Lower lobe of right lung (tissue), 2 donors: ENCODE measurements at regions of chr10 and their contacts with region 1.

Region 1: DNA sequence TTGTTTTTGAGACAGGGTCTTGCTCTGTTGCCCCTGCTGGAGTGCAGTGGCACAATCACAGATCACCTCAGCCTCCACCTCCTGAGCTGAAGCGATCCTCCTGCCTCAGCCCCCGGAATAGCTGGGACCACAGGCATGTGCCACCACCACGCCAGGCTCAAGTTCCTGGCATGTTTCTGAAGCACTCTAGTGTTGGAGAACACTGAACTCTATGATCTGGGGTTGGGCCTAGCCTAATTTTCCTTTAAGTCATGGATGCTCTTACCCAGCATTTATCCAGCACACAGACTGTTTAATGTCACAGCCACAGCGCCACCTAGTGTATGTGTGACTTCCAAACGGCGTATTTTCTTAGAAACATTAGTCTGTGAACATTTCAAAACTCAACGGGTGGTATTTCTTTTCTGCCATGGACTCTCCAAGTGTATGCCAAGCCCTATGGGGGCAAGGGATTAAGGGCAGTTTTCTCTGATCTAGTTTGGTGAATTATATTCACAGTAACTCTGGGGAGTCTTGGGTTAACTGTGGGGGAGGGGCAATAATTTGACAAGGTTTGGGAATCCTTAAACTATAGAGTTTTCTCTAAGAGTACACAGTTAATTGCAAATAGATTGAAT is 91.8 kb downstream of the CREM start:
- DNase-seq: peak; percentile 80
- ATAC-seq: peak; percentile 87 to 91
- H3K4me3 ChIP-seq: no peak overlapping the region
- H3K27ac ChIP-seq: peak overlapping the region; percentile 56
- H3K4me1 ChIP-seq: peaks cover 28% of the 10 kb centered on the region
- H3K27me3 ChIP-seq: no peaks in the 10 kb centered on the region
- CTCF ChIP-seq: peak; percentile 76

Region 2: DNA sequence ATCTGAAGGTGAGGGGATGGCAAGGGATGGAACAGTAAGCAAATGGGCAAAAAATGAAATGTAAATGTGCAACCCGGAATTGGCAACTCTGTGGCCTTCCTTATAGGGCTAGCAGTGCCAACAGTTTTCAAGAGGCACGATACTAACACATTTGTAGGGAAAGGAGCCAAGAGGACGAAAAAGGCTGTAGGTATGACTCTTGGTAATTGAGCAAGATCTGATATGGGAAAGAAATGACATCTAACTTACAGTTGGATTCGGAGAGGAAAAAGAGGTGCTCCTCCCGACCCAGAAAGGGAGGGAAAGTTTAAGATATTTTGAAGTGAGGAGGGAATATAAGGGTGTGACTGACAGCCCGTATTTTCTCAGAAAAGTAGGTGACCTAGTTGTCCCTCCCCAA is 93.9 kb before region 1 on chr10:
- intact Hi-C with region 1: loop called (anchors 5 kb)
- DNase-seq: no peak
- ATAC-seq: no peak
- H3K4me3 ChIP-seq: no peak overlapping the region
- H3K27ac ChIP-seq: no peak overlapping the region
- H3K4me1 ChIP-seq: peaks cover 25% of the 10 kb centered on the region
- H3K27me3 ChIP-seq: no peaks in the 10 kb centered on the region
- CTCF ChIP-seq: no peak

Region 3: GRCh38 chr10:35153716-35154479 is 64.5 kb before region 1 on chr10:
- intact Hi-C with region 1: no loop called
- DNase-seq: no peak
- ATAC-seq: no peak
- H3K4me3 ChIP-seq: no peak overlapping the region
- H3K27ac ChIP-seq: no peak overlapping the region
- H3K4me1 ChIP-seq: no peaks in the 10 kb centered on the region
- H3K27me3 ChIP-seq: no peaks in the 10 kb centered on the region
- CTCF ChIP-seq: no peak